Psoas muscle (tissue), 8 donors: ENCODE measurements at regions of chr12 and their contacts with region 1.

Region 1: GRCh38 chr12:121144416-121144914 is 11.8 kb downstream of the P2RX7 start:
- DNase-seq: no peak
- ATAC-seq: peak in 1 of 4 donors; percentile 30
- H3K4me3 ChIP-seq: no peak overlapping the region
- H3K27ac ChIP-seq: no peak overlapping the region
- H3K4me1 ChIP-seq: no peaks in the 10 kb centered on the region
- H3K27me3 ChIP-seq: no peaks in the 10 kb centered on the region
- CTCF ChIP-seq: no peak

Region 2: DNA sequence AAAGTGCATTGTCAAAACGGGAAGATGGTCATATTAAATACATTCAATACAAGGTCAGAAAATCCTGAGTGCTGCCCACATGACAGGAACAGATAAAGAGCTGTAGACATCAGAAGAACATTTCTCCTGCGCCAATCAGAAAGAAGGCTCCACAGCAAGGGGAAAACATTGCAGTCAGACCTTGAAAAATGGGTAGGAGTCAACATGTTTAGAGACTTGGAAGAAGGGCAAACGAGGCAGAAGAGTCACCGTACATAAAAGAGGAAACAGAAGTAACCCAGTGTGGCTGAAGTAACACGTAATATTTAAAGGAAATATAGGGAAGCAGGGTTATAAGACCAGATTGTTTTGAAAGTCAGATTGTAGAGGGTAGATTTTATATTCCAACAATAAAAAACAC is 252.2 kb before region 1 on chr12:
- intact Hi-C with region 1: no loop called
- DNase-seq: no peak
- ATAC-seq: no peak
- H3K4me3 ChIP-seq: no peak overlapping the region
- H3K27ac ChIP-seq: peak overlapping the region; percentile 16
- H3K4me1 ChIP-seq: peaks cover 18% of the 10 kb centered on the region
- H3K27me3 ChIP-seq: no peaks in the 10 kb centered on the region
- CTCF ChIP-seq: no peak

Region 3: DNA sequence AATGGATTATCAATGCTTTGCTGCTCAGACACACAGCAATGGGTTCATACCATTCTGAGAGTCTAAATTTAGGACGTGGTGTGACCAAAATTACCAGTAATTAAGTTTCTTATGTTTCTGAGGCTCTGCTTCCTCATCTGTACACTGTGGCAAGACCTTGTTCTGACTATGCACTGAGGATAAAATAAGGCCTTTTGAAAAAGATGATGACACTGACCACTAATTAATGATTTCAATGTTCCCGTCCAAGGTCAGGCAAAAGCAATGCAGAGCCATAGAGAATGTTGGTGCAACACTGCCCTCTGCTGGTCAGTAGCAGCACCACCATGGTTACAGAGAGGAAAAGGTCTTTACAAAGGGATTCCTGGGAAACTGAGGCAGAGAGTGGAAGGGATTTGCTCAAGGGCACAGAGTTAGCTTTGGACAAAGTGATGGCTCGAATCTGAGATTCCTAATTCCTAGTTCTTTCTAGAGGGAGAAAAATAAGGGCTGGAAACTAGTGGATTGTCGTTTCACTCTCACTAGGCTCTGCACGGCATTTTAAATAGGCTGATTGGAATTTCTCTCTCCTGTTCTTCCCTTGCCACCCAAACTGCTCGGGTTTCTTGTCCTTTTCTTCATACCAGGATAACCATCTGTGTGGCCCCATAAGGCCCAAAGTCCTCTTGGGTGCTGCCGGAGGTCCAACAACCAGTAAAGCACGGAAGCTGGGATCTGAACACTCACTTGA is 34.1 kb before region 1 on chr12:
- intact Hi-C with region 1: loop called in 1 of 2 experiments (anchors 1 kb)
- DNase-seq: peak; percentile 43 to 61
- ATAC-seq: peak; percentile 58 to 85 (median 76)
- H3K4me3 ChIP-seq: no peak overlapping the region
- H3K27ac ChIP-seq: no peak overlapping the region
- H3K4me1 ChIP-seq: no peaks in the 10 kb centered on the region
- H3K27me3 ChIP-seq: no peaks in the 10 kb centered on the region
- CTCF ChIP-seq: peak; percentile 95

Region 4: GRCh38 chr12:121167232-121167820 is 22.9 kb after region 1 on chr12:
- intact Hi-C with region 1: no loop called
- DNase-seq: no peak
- ATAC-seq: no peak
- H3K4me3 ChIP-seq: no peak overlapping the region
- H3K27ac ChIP-seq: no peak overlapping the region
- H3K4me1 ChIP-seq: no peaks in the 10 kb centered on the region
- H3K27me3 ChIP-seq: peaks cover 0 to 2% (median 0%) of the 10 kb centered on the region in 3 donors
- CTCF ChIP-seq: no peak